ENCODE measurements at regions of chr19 and their contacts with region 1.

Region 1: DNA sequence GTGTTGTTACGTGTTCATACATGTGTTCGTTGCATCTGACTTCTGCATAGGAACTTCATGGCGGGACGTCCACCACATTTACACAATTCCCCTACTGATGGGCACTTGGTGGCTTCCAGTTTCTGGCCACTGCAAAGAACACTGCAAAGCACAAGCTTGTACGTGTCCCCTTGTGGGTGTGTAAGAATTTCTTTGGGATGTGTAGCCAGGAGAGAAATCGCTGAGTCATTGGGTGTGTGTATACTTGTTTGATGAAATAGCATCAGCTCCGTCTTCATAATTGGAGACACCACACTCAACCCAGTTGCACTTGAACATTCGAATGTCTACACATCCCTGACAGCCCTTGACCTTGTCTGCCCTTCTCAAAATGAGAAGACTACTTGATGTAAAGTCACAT is 19.2 kb downstream of the KLK5 start:
- DNase-seq: peak; percentile 60
- H3K4me3 Mint-ChIP-seq: no peak overlapping the region
- H3K27ac Mint-ChIP-seq: peak overlapping the region; percentile 54
- H3K4me1 Mint-ChIP-seq: peaks cover 28% of the 10 kb centered on the region
- H3K27me3 Mint-ChIP-seq: peaks cover 16% of the 10 kb centered on the region
- CTCF ChIP-seq: no peak

Region 2: DNA sequence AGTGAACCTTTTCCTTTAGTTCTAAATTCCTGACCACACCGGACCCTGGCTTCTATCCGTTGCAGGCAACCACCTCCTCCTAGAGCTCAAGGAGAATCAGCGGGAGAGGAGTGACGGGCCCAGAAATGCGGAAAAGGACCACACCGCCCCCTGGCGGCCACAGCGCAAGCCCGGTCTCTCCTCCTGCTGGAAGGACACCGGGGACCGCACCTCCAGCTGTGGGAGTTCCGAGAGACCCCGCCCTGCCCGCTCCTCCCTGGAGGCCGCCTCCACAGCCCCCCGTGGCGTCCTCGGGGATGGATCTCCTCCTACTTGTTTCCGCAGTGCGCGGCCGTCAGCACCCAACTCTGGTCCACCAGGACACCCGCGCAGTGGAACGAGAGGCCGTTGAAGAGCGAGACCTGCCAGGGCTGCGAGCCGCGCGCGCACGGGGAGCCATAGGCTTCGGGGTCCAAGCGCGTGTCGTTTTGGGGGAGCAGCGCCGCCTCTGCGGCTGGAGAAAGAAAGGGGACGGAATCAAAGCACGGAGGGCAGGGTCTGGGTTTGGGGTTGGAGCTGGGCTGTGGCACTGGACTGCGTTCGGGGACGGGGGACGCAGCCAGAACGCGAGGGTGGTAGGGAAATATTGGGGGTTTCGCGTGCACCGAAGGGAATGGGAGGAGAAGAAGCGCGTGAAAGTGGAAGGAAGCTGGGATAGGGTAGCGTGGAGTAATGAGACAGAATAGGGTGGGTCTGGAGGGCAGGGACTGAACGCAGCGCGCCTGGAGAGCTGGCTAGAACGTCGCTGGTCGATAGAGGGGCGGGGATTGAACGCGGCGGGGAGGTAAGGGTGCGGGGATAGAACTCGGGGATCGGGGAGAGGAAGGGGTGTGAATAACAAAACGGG is 83.4 kb after region 1 on chr19:
- CTCF ChIA-PET with region 1: interaction called, 13 read pairs
- POLR2A ChIA-PET with region 1: no interaction called
- intact Hi-C with region 1: loop called (anchors 1 kb)
- DNase-seq: no peak
- H3K4me3 Mint-ChIP-seq: peak overlapping the region; percentile 3
- H3K27ac Mint-ChIP-seq: no peak overlapping the region
- H3K4me1 Mint-ChIP-seq: peaks cover 7% of the 10 kb centered on the region
- H3K27me3 Mint-ChIP-seq: peaks cover 40% of the 10 kb centered on the region
- CTCF ChIP-seq: peak; percentile 59

Region 3: DNA sequence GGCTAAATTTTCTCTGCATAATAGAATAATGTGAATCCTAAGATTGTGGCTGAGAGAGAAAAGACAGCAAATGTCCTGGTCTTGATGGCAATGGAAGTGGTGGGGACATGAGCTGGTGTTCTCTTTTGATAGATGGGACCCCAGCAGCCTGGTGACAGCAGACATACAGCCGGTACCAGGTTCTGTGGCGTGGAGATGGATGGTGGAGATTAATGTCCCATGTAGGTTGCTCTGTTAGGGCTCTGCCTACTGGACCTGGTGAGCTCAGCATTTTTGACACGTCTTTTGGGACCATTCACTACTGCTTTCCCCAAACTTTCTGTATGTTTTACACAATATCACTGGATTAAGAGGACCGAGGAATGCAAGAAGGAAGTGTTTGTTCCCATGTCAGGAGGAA is 721.1 kb after region 1 on chr19:
- CTCF ChIA-PET with region 1: no interaction called
- POLR2A ChIA-PET with region 1: no interaction called
- intact Hi-C with region 1: loop called (anchors 5 kb)
- DNase-seq: no peak
- H3K4me3 Mint-ChIP-seq: no peak overlapping the region
- H3K27ac Mint-ChIP-seq: no peak overlapping the region
- H3K4me1 Mint-ChIP-seq: peaks cover 7% of the 10 kb centered on the region
- H3K27me3 Mint-ChIP-seq: peaks cover 22% of the 10 kb centered on the region
- CTCF ChIP-seq: no peak